ENCODE measurements at regions of chr17 and their contacts with region 1.

Region 1: DNA sequence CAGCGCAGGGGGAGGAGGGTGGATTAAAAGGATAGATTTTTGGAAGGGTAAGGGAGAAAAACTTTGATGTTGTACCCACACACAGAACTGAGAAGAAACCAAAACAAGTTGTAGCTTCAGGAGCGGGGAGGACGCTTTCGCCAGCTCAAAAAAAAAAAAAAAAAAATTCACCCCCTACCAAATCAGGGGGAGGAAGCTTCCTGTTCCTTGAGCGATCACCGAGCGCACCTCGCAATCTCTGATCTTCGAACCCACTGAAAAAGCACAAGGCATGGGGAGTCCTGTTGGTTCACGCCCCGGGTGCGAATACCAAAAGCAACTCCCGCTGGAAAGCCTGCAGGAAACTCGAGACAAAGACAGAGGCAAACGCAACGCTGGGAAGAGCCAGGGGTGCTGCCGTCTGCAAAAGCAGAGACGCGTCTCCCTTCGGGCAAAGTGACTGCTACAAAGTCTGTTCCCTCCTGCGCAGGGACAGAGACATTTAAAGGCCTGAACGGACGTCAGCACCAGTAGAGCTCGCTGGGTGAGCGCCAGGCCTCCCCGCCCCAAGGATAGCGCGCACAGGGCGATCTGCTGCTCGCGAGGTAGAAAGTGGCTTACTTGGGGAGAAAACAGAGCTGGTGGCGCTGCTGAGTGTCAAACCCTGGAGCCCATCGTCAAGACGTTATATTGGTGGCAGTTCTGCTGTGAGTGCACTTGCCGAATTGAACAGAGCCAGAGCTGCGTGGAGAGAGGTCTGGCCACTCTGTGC is 190.4 kb downstream of the USP22 start:
- DNase-seq: peak; percentile 28
- H3K4me3 Mint-ChIP-seq: peak overlapping the region; percentile 68
- H3K27ac Mint-ChIP-seq: no peak overlapping the region
- H3K4me1 Mint-ChIP-seq: peaks cover 15% of the 10 kb centered on the region
- H3K27me3 Mint-ChIP-seq: peaks cover 40% of the 10 kb centered on the region

Region 2: DNA sequence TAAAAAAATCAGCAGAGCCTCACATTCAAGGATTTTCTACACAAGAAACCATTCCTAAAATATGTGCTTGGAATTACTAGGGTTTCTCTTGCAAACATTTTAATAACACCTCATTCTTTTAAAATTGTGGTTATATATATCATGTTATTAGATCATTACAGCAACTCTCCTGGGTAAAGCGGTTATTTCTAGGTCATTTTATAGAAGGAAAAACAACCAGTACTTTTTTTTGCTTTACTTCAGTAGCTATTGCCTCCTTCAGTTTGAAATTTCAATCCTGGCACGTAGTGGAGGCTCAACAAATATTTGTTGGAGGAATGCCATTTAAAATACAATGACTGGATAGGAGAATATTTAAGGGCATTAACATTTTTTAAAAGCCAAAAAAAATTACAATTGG is 52.3 kb before region 1 on chr17:
- CTCF ChIA-PET with region 1: interaction called, 4 read pairs
- intact Hi-C with region 1: loop called (anchors 5 kb)
- DNase-seq: no peak
- H3K4me3 Mint-ChIP-seq: no peak overlapping the region
- H3K27ac Mint-ChIP-seq: no peak overlapping the region
- H3K4me1 Mint-ChIP-seq: peaks cover 2% of the 10 kb centered on the region
- H3K27me3 Mint-ChIP-seq: peaks cover 4% of the 10 kb centered on the region

Region 3: GRCh38 chr17:20908373-20909273 is 56.2 kb after region 1 on chr17:
- CTCF ChIA-PET with region 1: no interaction called
- intact Hi-C with region 1: no loop called
- DNase-seq: peak; percentile 88
- H3K4me3 Mint-ChIP-seq: peak overlapping the region; percentile 78
- H3K27ac Mint-ChIP-seq: peak overlapping the region; percentile 65
- H3K4me1 Mint-ChIP-seq: peaks cover 5% of the 10 kb centered on the region
- H3K27me3 Mint-ChIP-seq: peaks cover 6% of the 10 kb centered on the region

Region 4: DNA sequence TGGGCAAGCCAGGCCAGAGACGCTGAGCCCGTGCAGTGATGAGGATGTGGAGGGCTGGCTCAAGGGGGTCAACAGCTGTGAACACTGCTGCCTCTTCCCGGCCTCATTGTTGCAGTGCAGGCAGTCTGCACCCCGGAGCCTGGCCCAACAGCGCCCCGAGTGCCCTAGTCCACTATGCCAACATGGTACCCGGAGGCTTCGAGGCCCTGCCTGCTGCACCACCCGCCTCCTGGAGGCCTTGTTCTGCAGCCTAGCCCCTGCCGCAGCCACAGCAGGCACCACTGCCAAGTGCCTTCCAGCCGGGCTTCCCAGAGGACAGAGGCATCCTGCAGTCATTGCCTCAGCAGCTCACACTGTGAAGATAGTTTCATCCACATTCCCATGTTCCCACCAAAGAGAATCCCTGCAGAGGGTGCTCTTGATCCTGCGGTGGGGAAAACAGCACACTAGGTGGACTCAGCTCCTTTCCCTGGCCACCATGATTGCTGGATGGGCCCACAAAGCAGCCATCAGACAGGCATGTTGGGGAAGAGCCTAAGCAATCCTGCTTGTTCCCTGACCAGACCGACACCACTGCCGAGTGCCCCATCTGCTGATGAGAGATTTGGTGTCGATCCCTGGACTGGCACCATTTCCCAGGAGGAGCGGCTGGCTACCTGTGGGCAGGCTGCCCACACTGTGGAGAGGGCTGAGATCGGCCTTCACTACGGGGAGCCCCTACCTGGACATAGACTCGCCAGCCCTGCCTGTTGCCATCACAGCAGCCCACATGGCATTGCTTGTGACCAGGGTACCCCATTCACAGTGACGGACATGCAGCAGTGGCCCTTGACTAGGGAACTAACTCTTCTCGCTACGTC is 145.5 kb after region 1 on chr17:
- CTCF ChIA-PET with region 1: no interaction called
- intact Hi-C with region 1: no loop called
- DNase-seq: no peak
- H3K4me3 Mint-ChIP-seq: no peak overlapping the region
- H3K27ac Mint-ChIP-seq: peak overlapping the region; percentile 14
- H3K4me1 Mint-ChIP-seq: peaks cover 37% of the 10 kb centered on the region
- H3K27me3 Mint-ChIP-seq: no peaks in the 10 kb centered on the region